Right ventricle myocardium inferior (tissue), 1 donor: ENCODE measurements at regions of chr5 and their contacts with region 1.

Region 1: GRCh38 chr5:33440482-33441240 is at the start of gene TARS1:
- DNase-seq: peak; percentile 98
- ATAC-seq: peak; percentile 99
- total RNA-seq, gene TARS1: 67.7 TPM

Region 2: DNA sequence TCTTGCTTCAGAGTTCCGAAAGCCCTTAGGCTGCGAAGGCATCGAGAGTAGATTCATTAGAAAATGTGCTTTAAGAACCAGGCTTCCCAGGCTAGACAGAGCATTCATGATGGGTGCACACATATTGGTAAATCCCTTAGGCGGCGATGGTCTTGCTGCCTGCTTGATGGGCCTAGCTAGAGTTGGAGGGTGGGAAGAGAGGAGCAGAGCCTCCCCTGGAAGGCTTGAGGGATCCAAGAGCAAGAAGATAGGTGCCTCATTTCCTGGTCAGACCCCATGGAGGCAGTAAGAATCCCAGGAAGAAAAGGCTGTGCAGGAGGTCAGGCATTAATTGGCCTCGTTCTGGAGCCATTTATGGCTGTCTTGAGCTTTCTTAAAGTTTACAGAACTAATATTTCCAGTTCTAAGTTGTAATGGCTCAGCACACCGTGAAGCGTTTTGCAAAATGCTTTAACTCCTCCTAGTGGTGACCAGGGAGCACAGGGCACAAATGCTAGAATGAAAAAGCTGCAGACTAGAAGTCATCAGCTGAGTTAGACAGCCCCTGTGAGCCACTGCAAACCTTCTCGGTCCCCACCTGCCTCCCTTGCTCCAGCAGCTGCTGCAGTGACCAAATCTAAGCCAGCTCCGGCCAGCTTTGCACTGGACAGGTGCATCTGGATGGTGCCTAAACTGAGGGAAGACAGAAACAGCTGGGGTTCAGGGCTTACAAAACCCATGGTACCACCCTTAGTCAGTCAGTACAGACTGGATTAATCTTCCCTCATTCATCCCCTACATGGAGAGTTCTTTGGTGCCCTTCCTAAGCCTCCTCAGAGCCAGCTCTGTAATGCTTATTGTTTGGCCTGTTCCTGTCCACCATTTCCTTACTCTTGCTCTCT is 529.2 kb after region 1 on chr5:
- intact Hi-C with region 1: loop called (anchors 5 kb)
- DNase-seq: no peak
- ATAC-seq: peak; percentile 75

Region 3: DNA sequence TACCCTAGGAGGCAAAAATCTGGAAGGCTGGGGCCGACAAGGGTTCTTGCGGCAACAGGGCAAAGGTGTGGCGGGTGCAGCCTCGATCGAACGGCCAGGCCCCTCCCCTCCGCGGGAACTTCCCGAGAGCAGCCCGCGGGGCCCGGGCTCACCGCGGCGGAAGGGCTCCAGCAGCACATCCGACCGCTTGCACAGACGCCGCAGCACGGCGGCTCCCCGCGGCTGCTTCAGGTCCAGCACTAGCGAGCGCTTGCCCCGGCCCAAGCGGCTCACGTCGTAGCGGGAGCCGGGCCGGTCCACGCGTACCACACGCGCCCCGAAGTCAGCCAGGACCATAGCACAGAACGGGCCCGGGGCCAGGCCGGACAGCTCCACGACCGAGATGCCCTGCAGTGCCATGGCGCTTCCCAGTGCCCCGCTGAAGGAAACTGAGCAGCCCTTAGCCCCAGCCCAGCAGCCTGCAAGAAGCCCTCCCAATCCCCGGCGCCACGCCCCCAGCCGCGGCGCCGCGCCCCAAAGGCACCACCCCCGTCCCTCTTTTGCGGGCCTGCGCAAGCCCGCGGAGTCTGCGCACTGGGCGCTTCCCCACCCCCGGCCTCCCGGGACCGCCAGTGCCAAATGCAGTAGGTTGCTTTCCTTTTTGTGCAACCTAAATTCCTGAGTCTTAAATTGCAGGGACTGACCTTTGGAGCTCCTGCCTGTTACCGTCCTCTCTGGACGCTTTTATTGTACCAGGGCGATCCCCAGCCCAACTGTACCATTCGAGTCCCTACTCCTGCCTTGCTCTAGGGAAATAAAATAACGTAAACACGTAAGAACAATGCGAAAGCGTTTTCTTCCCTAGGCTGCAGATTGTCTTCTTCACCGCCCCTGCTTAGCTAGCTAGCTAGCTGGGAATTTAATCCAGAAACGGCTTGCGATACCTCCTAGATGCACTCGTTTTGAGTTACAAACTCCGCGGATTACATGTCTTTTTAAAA is 567.2 kb after region 1 on chr5 and contains the start of gene AMACR:
- intact Hi-C with region 1: loop called (anchors 2 kb)
- DNase-seq: peak; percentile 96
- ATAC-seq: peak; percentile 99
- total RNA-seq, gene AMACR: 6.1 TPM

Region 4: DNA sequence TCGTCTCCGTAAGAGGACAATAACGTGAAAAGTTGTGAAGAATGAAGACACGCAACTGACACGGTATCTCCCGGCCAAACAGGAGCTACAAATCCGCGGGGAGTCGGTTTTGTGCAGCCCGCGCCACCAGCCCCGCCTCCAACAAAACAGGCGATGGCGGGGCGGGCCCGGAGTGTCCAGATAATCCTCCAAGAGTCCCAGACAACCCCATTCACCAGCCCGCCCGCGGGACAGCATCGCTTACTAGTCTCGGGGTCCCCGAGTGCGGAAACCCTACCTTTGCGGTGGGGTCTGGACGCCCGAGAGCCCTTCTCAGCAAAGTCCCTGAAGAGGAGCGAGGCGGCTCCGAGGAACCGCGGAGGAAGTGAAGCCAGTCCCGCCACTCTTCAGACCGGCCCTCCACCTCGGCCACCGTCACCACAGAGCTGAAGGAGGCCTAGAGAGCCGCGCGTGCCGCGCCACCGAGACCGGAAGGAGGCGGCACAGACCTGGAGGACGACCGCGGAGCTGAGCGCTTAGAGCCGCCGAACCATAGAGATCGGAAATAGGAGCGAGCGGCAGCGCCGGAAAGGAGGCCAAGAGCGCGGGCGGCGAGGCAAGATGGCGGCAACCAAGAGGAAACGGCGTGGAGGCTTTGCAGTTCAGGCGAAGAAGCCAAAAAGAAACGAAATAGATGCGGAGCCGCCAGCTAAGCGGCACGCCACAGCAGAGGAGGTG is 1474.6 kb after region 1 on chr5 and contains the starts of genes BRIX1 and RAD1:
- intact Hi-C with region 1: loop called (anchors 10 kb)
- DNase-seq: peak; percentile 99
- ATAC-seq: peak; percentile 100
- total RNA-seq, gene BRIX1: 10.3 TPM
- total RNA-seq, gene RAD1: 22.7 TPM